GM23248 (cell line): ENCODE measurements at regions of chr6 and their contacts with region 1.

Region 1: DNA sequence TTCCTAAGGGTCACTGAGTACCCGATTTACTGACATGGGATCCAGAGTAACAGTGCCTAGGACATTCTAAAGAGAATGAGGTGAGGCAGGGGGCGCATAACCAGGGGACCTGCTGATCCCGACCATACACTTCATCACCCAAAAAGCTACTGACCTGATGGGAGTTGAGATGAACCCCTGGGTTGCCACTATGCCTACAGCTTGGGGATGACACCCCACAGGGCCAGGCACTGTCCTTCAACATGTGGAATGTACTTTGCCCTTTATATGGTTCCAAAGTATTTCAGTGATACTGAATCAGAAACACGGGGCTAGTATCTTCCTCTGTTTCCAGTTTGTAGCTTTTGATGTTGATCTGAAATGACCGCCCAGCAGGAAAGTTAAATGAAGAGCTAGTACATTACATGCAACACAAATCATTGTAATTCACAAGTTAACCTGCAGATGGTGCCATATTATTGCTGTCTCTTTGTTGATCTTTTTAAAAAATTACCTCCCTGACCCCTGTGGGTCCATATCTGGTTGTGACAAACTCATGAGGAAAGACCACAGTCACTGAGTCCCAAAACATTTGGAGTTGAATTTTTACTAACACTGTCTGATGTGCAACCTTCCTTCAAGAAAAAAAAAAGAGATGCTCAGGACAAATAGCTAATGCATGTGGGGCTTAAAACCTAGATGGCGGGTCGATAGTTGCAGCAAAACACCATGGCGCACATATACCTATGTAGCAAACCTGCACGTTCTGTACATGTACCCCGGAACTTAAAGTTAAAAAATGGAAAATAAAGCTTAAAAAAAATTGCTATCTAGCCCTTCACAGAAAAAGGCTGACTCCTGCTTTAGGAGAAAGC is 42.7 kb upstream of the GCNT2 start:
- DNase-seq: peak; percentile 37
- H3K4me3 ChIP-seq: no peak overlapping the region
- H3K27ac ChIP-seq: no peak overlapping the region
- H3K4me1 ChIP-seq: no peaks in the 10 kb centered on the region
- H3K27me3 ChIP-seq: no peaks in the 10 kb centered on the region

Region 2: GRCh38 chr6:10060004-10060403 is 418.4 kb before region 1 on chr6:
- in situ Hi-C with region 1: no loop called
- DNase-seq: no peak
- H3K4me3 ChIP-seq: no peak overlapping the region
- H3K27ac ChIP-seq: no peak overlapping the region
- H3K4me1 ChIP-seq: no peaks in the 10 kb centered on the region
- H3K27me3 ChIP-seq: peaks cover 4% of the 10 kb centered on the region; the same call in 1 of the 2 replicates

Region 3: DNA sequence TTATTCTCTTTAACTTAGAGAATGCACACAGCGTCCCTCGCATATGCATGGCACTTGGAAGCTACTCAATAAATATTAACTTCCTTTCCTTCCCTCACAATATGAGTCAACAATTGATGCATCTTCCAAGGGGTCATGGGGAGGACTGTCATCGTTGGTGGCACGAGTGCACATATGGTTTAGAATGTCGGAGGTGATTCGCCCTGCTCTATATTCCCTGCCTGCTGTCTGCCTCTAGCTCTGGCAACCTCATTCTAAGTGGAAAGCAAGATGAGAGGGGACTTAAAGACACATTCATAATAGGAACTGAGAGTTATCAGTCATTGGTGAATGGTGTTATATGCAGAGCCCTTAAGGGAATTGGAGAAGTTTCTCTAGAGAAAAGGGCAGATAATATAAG is 315.3 kb after region 1 on chr6:
- in situ Hi-C with region 1: loop called (anchors 10 kb)
- DNase-seq: no peak
- H3K4me3 ChIP-seq: no peak overlapping the region
- H3K27ac ChIP-seq: no peak overlapping the region
- H3K4me1 ChIP-seq: no peaks in the 10 kb centered on the region
- H3K27me3 ChIP-seq: no peaks in the 10 kb centered on the region